ENCODE measurements at regions of chr18 and their contacts with region 1.

Region 1: DNA sequence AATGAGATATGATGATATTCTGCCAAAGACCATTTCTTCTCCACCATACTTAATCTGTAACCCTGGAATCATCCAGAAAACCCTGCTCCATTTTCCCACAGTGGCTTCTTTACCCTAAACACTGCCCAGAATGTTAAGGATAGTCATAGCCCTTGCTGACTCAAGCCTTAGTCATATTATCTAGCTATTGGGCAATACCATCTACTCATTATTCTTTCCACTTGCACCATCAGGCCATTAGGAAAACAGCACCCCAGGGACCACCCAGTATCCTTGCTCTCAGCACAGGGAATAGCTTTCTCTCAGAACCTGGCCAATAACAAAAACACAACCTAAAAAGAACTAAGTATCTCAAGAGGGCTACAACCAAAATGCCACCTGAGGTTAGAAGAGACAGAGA is 445.7 kb upstream of the SLC14A2 start:
- DNase-seq: peak; percentile 93
- H3K4me3 Mint-ChIP-seq: no peak overlapping the region
- H3K27ac Mint-ChIP-seq: peak overlapping the region; percentile 93
- H3K4me1 Mint-ChIP-seq: peaks cover 41% of the 10 kb centered on the region
- H3K27me3 Mint-ChIP-seq: no peaks in the 10 kb centered on the region
- CTCF ChIP-seq: no peak

Region 2: GRCh38 chr18:45059695-45060094 is 109.9 kb before region 1 on chr18:
- CTCF ChIA-PET with region 1: no interaction called
- POLR2A ChIA-PET with region 1: no interaction called
- intact Hi-C with region 1: loop called (anchors 5 kb)
- DNase-seq: peak; percentile 85
- H3K4me3 Mint-ChIP-seq: no peak overlapping the region
- H3K27ac Mint-ChIP-seq: no peak overlapping the region
- H3K4me1 Mint-ChIP-seq: peaks cover 10% of the 10 kb centered on the region
- H3K27me3 Mint-ChIP-seq: no peaks in the 10 kb centered on the region
- CTCF ChIP-seq: no peak